ENCODE measurements at regions of chr11 and their contacts with region 1.

Region 1: GRCh38 chr11:13384908-13385640 is 77.9 kb downstream of the BTBD10 start:
- DNase-seq: peak in 4 of 9 experiments; percentile 17 to 50 (median 28)
- ATAC-seq: peak; percentile 29
- H3K4me3 ChIP-seq: no peak overlapping the region
- H3K4me3 Mint-ChIP-seq: no peak overlapping the region
- H3K27ac ChIP-seq: no peak overlapping the region
- H3K27ac Mint-ChIP-seq: no peak overlapping the region
- H3K4me1 ChIP-seq: no peaks in the 10 kb centered on the region
- H3K4me1 Mint-ChIP-seq: peaks cover 3% of the 10 kb centered on the region
- H3K27me3 ChIP-seq: no peaks in the 10 kb centered on the region
- H3K27me3 Mint-ChIP-seq: no peaks in the 10 kb centered on the region
- CTCF ChIP-seq: peak; percentile 59

Region 2: GRCh38 chr11:12963792-12964536 is 421.1 kb before region 1 on chr11:
- CTCF ChIA-PET with region 1: interaction called, 7 read pairs
- POLR2A ChIA-PET with region 1: no interaction called
- intact Hi-C with region 1: loop called in 1 of 2 experiments (anchors 10 kb)
- DNase-seq: peak; percentile 11 to 69 (median 58)
- ATAC-seq: peak; percentile 58
- H3K4me3 ChIP-seq: no peak overlapping the region
- H3K4me3 Mint-ChIP-seq: no peak overlapping the region
- H3K27ac ChIP-seq: no peak overlapping the region
- H3K27ac Mint-ChIP-seq: no peak overlapping the region
- H3K4me1 ChIP-seq: no peaks in the 10 kb centered on the region
- H3K4me1 Mint-ChIP-seq: no peaks in the 10 kb centered on the region
- H3K27me3 ChIP-seq: peaks cover 0 to 3% of the 10 kb centered on the region in 2 experiments
- H3K27me3 Mint-ChIP-seq: peaks cover 30% of the 10 kb centered on the region
- CTCF ChIP-seq: peak; percentile 52

Region 3: DNA sequence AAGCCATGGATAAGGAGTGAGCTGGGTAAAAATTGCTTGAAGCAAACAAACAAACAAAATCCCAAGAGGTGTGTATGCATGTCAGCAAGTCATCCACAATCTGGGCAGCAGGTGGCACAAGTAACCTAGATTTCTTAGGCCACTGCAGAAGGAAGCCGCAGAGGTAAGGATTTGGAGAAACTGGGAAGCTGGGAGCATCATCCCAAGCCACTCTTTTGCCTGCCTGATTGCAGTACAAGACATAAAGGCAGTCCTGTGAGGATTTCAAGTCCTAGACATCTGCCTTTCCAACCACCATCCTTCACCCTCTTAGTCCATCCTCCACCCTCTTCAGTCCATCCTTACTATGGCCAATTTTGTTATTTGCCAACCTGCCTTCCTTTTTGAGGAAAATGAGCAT is 174.7 kb before region 1 on chr11:
- CTCF ChIA-PET with region 1: interaction called, 3 read pairs
- POLR2A ChIA-PET with region 1: no interaction called
- intact Hi-C with region 1: loop called in 1 of 2 experiments (anchors 1 kb)
- DNase-seq: peak in 4 of 9 experiments; percentile 26 to 52 (median 36)
- ATAC-seq: peak; percentile 26
- H3K4me3 ChIP-seq: no peak overlapping the region
- H3K4me3 Mint-ChIP-seq: no peak overlapping the region
- H3K27ac ChIP-seq: no peak overlapping the region
- H3K27ac Mint-ChIP-seq: no peak overlapping the region
- H3K4me1 ChIP-seq: peaks cover 7% of the 10 kb centered on the region
- H3K4me1 Mint-ChIP-seq: peaks cover 15% of the 10 kb centered on the region
- H3K27me3 ChIP-seq: no peaks in the 10 kb centered on the region
- H3K27me3 Mint-ChIP-seq: peaks cover 7% of the 10 kb centered on the region
- CTCF ChIP-seq: peak; percentile 22

Measured in CD8-positive, alpha-beta T cell (primary cell).